Kidney (tissue), 22 donors: ENCODE measurements at regions of chr10 and their contacts with region 1.

Region 1: DNA sequence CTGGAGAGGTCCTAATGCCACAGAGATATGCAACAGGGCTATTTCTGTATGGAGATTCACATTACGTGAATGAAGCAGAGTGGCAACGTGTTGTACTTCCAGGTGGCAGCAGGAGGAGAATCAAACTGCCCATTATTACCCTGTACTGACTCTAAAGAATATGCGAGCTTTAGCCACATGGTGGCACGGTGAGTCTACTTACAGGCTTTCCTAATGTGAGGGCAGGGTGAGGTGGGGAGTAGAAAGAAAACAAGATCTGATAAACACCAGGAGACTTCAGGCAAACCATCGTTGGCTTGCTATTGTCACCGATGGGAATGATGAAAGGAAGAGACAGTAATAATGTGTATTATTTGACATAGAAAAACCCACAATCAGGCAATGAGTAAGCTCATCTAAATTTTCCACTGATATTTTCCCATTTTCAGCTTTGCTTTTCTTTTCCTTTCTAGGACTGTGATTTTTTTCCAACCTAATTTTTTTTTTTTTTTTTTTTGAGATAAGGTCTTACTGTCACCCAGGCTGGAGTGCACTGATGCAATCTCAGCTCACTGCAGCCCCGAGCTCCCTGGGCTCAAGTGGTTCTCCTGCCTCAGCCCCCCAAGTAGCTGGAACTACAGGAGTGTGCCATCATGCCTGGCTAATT is 164.3 kb downstream of the BTAF1 start:
- DNase-seq: peak in 4 of 5 donors; percentile 75 to 93 (median 87)
- H3K4me3 ChIP-seq: no peak overlapping the region
- H3K27ac ChIP-seq: peak overlapping the region in 1 of 2 donors; percentile 49
- H3K4me1 ChIP-seq: no peaks in the 10 kb centered on the region
- H3K27me3 ChIP-seq: no peaks in the 10 kb centered on the region
- CTCF ChIP-seq: peak; percentile 88

Region 2: DNA sequence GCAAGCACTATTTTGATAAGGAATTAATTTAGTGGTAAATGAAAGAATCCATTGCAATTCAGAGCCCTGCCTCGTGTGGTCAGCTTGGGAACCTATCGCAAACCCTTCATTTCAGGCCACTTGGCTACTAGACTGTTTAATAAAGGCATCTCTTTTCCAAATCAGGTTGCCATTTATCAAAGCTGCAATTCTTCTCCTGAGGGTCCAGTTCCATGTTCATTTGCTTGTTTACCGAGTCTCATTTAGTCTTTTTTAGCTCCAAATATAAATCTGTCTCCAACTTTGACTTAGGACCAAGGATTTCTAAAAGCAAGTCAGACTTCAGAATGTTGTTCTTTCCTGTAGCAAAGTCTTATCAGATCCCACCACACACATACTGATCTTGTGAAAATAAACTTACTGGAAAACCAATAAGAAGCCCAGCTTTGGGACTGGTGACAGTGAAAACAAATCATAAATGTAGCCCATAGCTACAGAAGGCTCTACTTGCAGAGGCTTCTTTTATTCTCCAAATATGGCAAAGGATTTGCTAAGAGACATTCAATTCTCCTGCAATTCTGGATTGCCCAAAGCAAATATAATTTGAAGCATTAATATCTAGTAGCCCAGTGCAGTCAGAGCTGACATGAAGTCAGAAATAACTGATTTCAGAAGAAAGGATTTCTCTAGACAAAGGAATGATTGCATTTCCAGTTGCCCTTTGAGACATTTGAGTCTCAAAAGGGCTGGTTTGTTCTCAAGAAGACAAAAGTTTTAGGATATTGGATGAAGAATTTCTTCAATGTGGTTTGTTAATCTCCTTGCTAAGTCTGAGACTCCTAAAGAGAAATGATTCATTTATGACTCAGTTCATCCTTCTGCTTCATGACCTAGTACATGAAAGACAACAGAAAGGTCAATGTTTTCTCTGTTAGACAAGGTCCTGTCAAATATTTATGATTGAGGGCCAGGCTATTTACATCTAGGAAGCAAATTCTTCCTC is 483.0 kb before region 1 on chr10:
- intact Hi-C with region 1: no loop called
- DNase-seq: peak in 2 of 5 donors; percentile 77 to 88
- H3K4me3 ChIP-seq: peak overlapping the region in 2 of 3 donors; percentile 16 to 38
- H3K27ac ChIP-seq: peak overlapping the region; percentile 28 to 68
- H3K4me1 ChIP-seq: peaks cover 9 to 45% (median 18%) of the 10 kb centered on the region in 3 donors
- H3K27me3 ChIP-seq: no peaks in the 10 kb centered on the region
- CTCF ChIP-seq: peak; percentile 4

Region 3: DNA sequence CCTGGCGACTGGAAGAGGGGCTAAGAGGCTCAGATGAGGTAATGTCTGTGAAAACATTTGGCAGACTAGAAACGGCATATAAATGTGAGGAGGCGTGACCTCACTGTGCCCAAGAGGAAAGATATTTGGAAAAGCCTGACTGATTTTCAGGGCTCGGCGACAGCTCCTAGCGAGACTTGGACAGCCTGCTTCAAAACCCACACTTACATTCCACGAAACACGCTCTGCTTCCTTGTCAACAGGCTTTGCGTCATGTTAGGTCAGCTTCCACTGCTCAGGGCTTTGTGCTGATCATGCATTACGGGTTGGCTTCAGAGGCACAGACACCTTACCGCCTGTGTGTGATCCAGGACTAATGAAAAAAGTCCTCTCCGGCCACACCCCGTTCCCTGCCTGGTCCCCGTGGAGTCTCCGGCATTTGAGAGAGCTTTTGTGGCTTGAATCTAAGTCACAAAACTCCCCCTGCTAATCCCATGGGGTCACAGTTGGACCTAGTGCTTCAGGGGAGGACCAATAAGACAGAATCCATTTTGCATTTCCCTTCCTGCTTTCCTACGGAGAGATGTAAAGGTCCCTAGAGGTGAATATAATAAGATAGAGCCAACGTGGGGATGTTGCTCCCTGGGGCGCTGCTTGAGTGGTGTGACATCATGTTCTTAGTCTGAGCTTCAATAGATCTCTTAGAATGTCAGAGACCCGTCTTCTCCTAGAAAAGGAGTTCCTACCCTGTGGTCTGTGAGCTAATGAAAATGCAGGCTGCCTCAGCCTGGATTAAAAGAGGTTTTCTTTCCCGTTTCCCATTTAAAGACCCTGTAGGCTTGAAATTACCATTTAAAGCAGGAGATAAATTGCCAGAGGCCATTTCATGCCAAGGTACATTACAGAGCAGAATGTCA is 204.1 kb before region 1 on chr10:
- intact Hi-C with region 1: no loop called
- DNase-seq: peak in 4 of 5 donors; percentile 70 to 87 (median 76)
- H3K4me3 ChIP-seq: peak overlapping the region; percentile 23 to 50 (median 49)
- H3K27ac ChIP-seq: peak overlapping the region in 1 of 2 donors; percentile 23
- H3K4me1 ChIP-seq: peaks cover 0 to 3% (median 3%) of the 10 kb centered on the region in 3 donors
- H3K27me3 ChIP-seq: no peaks in the 10 kb centered on the region
- CTCF ChIP-seq: no peak

Region 4: DNA sequence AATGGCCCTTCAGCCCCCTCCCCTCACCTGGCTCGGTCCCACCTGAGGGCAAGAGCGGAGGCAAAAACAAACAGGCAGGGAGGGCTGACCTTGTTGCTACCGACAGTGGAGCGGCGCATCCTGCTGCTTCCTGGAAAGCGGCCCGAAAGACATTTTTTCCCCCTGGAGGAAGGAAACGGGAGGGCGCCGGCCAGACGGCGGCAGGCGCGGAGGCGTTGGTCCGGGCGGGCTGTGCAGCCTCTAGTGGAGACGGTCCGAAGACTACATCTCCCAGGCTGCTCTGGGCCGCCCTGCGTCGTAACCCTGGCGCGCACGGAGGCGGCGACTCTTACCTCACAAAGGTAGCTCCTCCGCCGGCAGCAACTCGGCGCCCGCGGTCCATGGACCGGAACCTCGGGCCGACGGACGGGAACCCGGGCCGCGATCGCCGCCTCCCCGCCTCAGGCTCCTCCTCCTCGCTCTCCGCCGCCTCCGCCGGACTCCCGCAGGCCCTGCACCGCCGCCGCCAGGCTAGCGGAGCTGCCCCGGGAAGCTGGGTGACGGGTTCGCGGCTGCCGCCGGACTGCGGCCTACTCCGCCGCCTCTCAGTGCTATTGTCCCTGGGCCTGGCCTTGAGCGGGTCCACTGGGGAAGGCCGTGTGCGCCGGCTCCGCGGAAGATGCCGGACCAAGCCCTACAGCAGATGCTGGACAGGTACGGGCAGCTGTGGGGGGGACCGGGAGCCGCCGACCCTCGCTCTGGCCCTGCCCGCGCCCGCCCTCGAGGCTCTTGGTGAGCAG is 203.2 kb after region 1 on chr10 and contains the starts of genes CPEB3 and MARCHF5:
- intact Hi-C with region 1: loop called (anchors 10 kb)
- DNase-seq: peak; percentile 98 to 99 (median 98)
- H3K4me3 ChIP-seq: peak within 1 kb of the TSS; percentile 82 to 89 (median 83)
- H3K27ac ChIP-seq: peak within 1 kb of the TSS; percentile 89 to 96
- H3K4me1 ChIP-seq: peaks cover 0 to 3% (median 0%) of the 10 kb centered on the region in 3 donors
- H3K27me3 ChIP-seq: no peaks in the 10 kb centered on the region
- CTCF ChIP-seq: peak; percentile 53
- total RNA-seq, gene CPEB3: 7.4 TPM
- total RNA-seq, gene MARCHF5: 36.1 TPM